ENCODE measurements at regions of chr12 and their contacts with region 1.

Region 1: GRCh38 chr12:49967042-49967776 is 5.5 kb downstream of the AQP5 start:
- DNase-seq: peak; percentile 71
- ATAC-seq: peak; percentile 79
- H3K4me3 ChIP-seq: peak overlapping the region; percentile 33 to 69 (median 40); a peak in 5 of 6 replicates
- H3K27ac ChIP-seq: no peak overlapping the region
- H3K4me1 ChIP-seq: peaks cover 54% of the 10 kb centered on the region
- H3K27me3 ChIP-seq: peaks cover 5 to 65% of the 10 kb centered on the region in 2 experiments
- CTCF ChIP-seq: peak; percentile 91
- EP300 ChIP-seq: no peak
- POLR2A ChIP-seq: no peak
- RAD21 ChIP-seq: peak; percentile 91

Region 2: DNA sequence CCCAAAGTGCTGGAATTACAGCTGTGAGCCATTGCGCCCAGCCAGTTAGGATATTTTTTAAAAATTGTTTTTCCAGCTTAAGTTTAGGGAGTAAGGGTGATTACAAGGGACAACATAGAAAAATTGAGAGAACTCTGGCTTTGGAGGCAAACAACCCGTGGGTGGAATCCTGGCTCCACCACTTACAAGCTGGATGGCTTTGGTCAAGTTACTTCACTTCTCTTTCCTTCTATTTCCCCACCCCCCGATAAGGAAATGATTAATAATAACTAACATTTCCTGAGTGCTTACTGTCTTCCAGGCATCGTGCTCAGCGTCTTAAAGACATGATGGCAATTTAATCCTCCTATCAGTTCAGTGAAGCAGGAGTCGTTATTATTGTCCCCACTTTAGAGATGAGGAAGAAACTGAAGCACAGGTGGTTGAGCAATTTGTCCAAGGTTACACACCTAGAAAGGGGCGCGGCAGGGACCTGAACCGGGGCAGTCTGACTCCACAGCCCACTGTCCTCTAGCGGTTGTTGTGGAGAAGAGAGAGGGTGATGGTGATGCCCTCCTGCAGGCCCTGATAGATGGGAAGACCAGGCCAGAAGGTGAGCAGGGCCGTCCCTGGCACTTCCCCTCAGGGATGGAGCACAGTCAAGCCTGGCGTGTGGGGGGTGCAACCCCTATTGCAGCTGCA is 46.8 kb before region 1 on chr12:
- CTCF ChIA-PET with region 1: no interaction called
- POLR2A ChIA-PET with region 1: no interaction called
- in situ Hi-C with region 1: no loop called
- intact Hi-C with region 1: no loop called
- DNase-seq: peak; percentile 33
- ATAC-seq: peak; percentile 83
- H3K4me3 ChIP-seq: no peak overlapping the region
- H3K27ac ChIP-seq: no peak overlapping the region
- H3K4me1 ChIP-seq: no peaks in the 10 kb centered on the region
- H3K27me3 ChIP-seq: peaks cover 3 to 11% of the 10 kb centered on the region in 2 experiments; a peak in 3 of 5 replicates
- CTCF ChIP-seq: peak; percentile 34; the same call in 1 of the 2 replicates
- EP300 ChIP-seq: no peak
- POLR2A ChIP-seq: no peak
- RAD21 ChIP-seq: no peak

Region 3: GRCh38 chr12:50043854-50044253 is 76.6 kb after region 1 on chr12:
- CTCF ChIA-PET with region 1: interaction called, 5 read pairs
- POLR2A ChIA-PET with region 1: no interaction called
- in situ Hi-C with region 1: no loop called
- intact Hi-C with region 1: loop called (anchors 1 kb)
- DNase-seq: no peak
- ATAC-seq: no peak
- H3K4me3 ChIP-seq: no peak overlapping the region
- H3K27ac ChIP-seq: no peak overlapping the region
- H3K4me1 ChIP-seq: peaks cover 9% of the 10 kb centered on the region; the same call in 1 of the 2 replicates
- H3K27me3 ChIP-seq: peaks cover 7 to 31% of the 10 kb centered on the region in 2 experiments; a peak in 4 of 5 replicates
- CTCF ChIP-seq: no peak
- EP300 ChIP-seq: no peak
- POLR2A ChIP-seq: no peak
- RAD21 ChIP-seq: no peak

Measured in HepG2 (cell line).